Adrenal gland (tissue), 19 donors: ENCODE measurements at regions of chr2 and their contacts with region 1.

Region 1: DNA sequence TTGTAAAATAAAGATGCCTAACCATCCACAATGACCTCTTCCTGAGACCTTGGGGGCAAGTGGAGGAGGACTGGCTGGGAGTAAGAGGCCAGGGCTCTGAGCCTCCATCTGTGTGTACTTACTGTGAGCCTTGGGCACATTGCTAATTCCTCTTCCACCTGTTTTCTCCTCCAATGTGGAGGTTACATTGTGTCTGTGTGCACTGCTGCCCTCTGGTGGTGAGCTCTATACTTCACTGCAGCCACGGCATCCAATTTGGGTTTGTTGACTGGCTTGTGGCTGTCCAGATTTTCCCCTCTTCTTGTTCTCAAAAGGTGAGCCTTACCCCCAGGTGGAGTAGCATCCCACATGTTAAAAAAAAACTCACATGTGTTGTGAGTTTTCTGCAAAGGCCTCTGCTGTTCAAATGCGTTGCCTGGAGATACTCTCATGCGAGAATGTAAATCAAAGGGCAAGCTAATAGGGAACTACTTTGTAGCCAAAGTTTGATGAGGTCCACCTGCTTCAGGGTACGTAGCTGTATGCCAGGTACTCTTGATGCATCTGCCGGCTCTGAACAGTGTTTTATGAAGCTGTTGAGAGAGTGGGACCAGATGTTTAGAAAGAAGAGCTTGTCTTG is 80.8 kb downstream of the APOB start:
- DNase-seq: peak; percentile 58 to 91 (median 72)
- H3K4me3 ChIP-seq: no peak overlapping the region
- H3K27ac ChIP-seq: no peak overlapping the region
- H3K4me1 ChIP-seq: no peaks in the 10 kb centered on the region
- H3K27me3 ChIP-seq: no peaks in the 10 kb centered on the region
- CTCF ChIP-seq: peak; percentile 85 to 92 (median 88)
- POLR2A ChIP-seq: no peak

Region 2: GRCh38 chr2:20525041-20526035 is 437.7 kb before region 1 on chr2:
- intact Hi-C with region 1: loop called in 1 of 2 experiments (anchors 5 kb)
- DNase-seq: peak in 3 of 7 donors; percentile 29 to 66 (median 59)
- H3K4me3 ChIP-seq: no peak overlapping the region
- H3K27ac ChIP-seq: peak overlapping the region in 3 of 5 donors; percentile 26 to 80 (median 68)
- H3K4me1 ChIP-seq: peaks cover 0 to 8% of the 10 kb centered on the region in 2 donors
- H3K27me3 ChIP-seq: no peaks in the 10 kb centered on the region
- CTCF ChIP-seq: no peak
- POLR2A ChIP-seq: no peak

Region 3: GRCh38 chr2:20661067-20661980 is 301.7 kb before region 1 on chr2:
- intact Hi-C with region 1: loop called (anchors 2 to 5 kb)
- DNase-seq: peak; percentile 50 to 87 (median 65)
- H3K4me3 ChIP-seq: no peak overlapping the region
- H3K27ac ChIP-seq: no peak overlapping the region
- H3K4me1 ChIP-seq: peaks cover 9 to 10% of the 10 kb centered on the region in 2 donors
- H3K27me3 ChIP-seq: peaks cover 40% of the 10 kb centered on the region
- CTCF ChIP-seq: peak; percentile 90 to 98 (median 95)
- POLR2A ChIP-seq: no peak

Region 4: GRCh38 chr2:20781656-20782265 is 181.3 kb before region 1 on chr2:
- intact Hi-C with region 1: loop called (anchors 5 to 10 kb)
- DNase-seq: peak in 1 of 7 donors; percentile 20
- H3K4me3 ChIP-seq: no peak overlapping the region
- H3K27ac ChIP-seq: no peak overlapping the region
- H3K4me1 ChIP-seq: no peaks in the 10 kb centered on the region
- H3K27me3 ChIP-seq: no peaks in the 10 kb centered on the region
- CTCF ChIP-seq: peak; percentile 28 to 62 (median 55)
- POLR2A ChIP-seq: no peak